AG04450 (cell line): ENCODE measurements at regions of chr4 and their contacts with region 1.

Region 1: GRCh38 chr4:107913281-107913899 is 18.0 kb upstream of the CYP2U1 start:
- DNase-seq: peak; percentile 50
- H3K4me3 ChIP-seq: no peak overlapping the region
- H3K27ac ChIP-seq: no peak overlapping the region
- H3K27me3 ChIP-seq: no peaks in the 10 kb centered on the region
- CTCF ChIP-seq: peak; percentile 74

Region 2: GRCh38 chr4:107896158-107897045 is 17.0 kb before region 1 on chr4:
- CTCF ChIA-PET with region 1: interaction called, 12 read pairs
- POLR2A ChIA-PET with region 1: no interaction called
- DNase-seq: peak; percentile 83
- H3K4me3 ChIP-seq: no peak overlapping the region
- H3K27ac ChIP-seq: no peak overlapping the region
- H3K27me3 ChIP-seq: no peaks in the 10 kb centered on the region
- CTCF ChIP-seq: no peak

Region 3: DNA sequence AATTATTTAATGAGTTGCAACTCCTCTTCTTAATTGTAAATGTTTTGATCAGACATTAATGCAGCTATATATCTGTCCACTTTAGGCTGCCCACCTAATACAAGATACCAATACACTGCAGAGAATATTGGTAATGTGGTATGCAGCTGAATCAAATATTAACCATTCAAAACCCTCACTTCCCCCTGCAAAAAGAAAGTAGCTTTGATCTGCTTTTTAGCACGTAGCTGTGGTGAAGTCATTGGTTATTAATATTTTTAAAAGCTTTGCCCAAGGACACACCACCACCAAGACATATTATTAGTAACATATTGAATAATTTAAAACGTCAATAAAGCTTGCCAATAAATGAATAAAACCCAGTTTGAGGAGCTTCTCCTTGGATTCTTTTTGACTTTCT is 10.7 kb before region 1 on chr4:
- CTCF ChIA-PET with region 1: interaction called, 12 read pairs
- POLR2A ChIA-PET with region 1: no interaction called
- DNase-seq: no peak
- H3K4me3 ChIP-seq: no peak overlapping the region
- H3K27ac ChIP-seq: no peak overlapping the region
- H3K27me3 ChIP-seq: no peaks in the 10 kb centered on the region
- CTCF ChIP-seq: no peak